ENCODE measurements at regions of chr5 and their contacts with region 1.

Region 1: GRCh38 chr5:132490486-132491367 is at the start of gene IRF1:
- DNase-seq: peak; percentile 95 to 97
- ATAC-seq: peak; percentile 86 to 94
- H3K4me3 ChIP-seq: peak within 1 kb of the TSS; percentile 83
- H3K27ac ChIP-seq: peak within 1 kb of the TSS; percentile 92 to 96
- H3K4me1 ChIP-seq: peaks cover 36% of the 10 kb centered on the region
- CTCF ChIP-seq: no peak; the same call in 2 of the 3 replicates
- EP300 ChIP-seq: no peak
- POLR2A ChIP-seq: peak; percentile 94
- RAD21 ChIP-seq: no peak
- polyA plus RNA-seq, gene IRF1: 10.9 and 11.2 TPM in 2 replicates

Region 2: DNA sequence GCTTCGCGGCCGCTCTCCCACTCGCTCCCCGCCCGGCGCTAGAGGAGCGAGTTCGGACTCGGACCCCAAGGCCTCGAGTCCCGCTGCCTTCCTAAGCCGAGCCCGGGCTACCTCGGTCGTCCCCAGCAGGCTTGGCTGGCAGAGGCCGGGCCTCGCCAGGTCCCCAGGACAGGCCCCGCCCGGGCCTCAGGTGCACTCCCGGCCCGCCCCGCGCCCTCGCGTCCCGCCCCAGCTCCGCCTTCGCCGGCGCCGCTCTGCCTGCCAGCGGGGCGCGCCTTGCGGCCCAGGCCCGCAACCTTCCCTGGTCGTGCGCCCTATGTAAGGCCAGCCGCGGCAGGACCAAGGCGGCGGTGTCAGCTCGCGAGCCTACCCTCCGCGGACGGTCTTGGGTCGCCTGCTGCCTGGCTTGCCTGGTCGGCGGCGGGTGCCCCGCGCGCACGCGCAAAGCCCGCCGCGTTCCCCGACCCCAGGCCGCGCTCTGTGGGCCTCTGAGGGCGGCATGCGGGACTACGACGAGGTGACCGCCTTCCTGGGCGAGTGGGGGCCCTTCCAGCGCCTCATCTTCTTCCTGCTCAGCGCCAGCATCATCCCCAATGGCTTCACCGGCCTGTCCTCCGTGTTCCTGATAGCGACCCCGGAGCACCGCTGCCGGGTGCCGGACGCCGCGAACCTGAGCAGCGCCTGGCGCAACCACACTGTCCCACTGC is 121.1 kb before region 1 on chr5 and contains the start of gene SLC22A5:
- CTCF ChIA-PET with region 1: interaction called, 5 read pairs
- POLR2A ChIA-PET with region 1: interaction called, 14 read pairs
- DNase-seq: peak; percentile 62 to 84
- ATAC-seq: peak; percentile 82 to 85
- H3K4me3 ChIP-seq: peak within 1 kb of the TSS; percentile 87
- H3K27ac ChIP-seq: peak within 1 kb of the TSS; percentile 92 to 93
- H3K4me1 ChIP-seq: peaks cover 68% of the 10 kb centered on the region
- CTCF ChIP-seq: no peak
- EP300 ChIP-seq: no peak
- POLR2A ChIP-seq: peak; percentile 65
- RAD21 ChIP-seq: no peak; a peak in 1 of 5 replicates
- polyA plus RNA-seq, gene SLC22A5: 35.3 and 44.8 TPM in 2 replicates

Region 3: GRCh38 chr5:132419502-132420468 is 70.9 kb before region 1 on chr5:
- CTCF ChIA-PET with region 1: interaction called, 91 read pairs
- POLR2A ChIA-PET with region 1: interaction called, 20 read pairs
- DNase-seq: peak; percentile 84 to 88
- ATAC-seq: peak; percentile 87 to 96
- H3K4me3 ChIP-seq: no peak overlapping the region
- H3K27ac ChIP-seq: peak overlapping the region; percentile 38 to 77; a peak in 5 of 6 replicates
- H3K4me1 ChIP-seq: peaks cover 33% of the 10 kb centered on the region
- CTCF ChIP-seq: peak; percentile 89
- EP300 ChIP-seq: no peak
- POLR2A ChIP-seq: no peak
- RAD21 ChIP-seq: peak; percentile 79 to 82

Region 4: DNA sequence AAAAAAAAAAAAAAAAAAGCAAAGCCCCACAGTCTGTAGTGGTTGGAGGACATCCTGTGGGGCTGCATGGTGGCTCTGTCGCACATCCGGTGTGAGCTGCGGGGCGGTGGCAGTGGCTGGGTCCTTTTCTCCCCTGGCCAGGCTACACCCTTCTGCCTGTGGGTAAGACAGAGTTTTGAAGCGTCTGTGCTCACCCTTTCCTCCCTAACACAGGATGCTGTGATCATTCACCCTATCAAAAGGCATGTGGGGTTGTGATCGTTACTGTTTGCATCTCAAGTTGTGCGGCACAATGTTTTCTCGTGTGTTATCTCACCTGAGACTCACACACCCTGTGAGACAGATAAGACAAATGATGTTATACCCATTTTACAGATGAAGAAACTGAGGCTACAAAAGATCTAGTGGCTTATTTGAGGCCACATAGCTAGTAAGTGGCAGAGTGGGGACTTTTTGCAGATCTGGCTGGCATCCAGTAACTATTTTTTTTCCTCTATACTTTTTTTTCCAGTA is 17.7 kb before region 1 on chr5:
- CTCF ChIA-PET with region 1: interaction called, 6 read pairs
- POLR2A ChIA-PET with region 1: interaction called, 32 read pairs
- DNase-seq: no peak
- ATAC-seq: no peak
- H3K4me3 ChIP-seq: no peak overlapping the region
- H3K27ac ChIP-seq: no peak overlapping the region
- H3K4me1 ChIP-seq: peaks cover 10% of the 10 kb centered on the region
- CTCF ChIP-seq: no peak
- EP300 ChIP-seq: no peak
- POLR2A ChIP-seq: no peak
- RAD21 ChIP-seq: no peak

Region 5: DNA sequence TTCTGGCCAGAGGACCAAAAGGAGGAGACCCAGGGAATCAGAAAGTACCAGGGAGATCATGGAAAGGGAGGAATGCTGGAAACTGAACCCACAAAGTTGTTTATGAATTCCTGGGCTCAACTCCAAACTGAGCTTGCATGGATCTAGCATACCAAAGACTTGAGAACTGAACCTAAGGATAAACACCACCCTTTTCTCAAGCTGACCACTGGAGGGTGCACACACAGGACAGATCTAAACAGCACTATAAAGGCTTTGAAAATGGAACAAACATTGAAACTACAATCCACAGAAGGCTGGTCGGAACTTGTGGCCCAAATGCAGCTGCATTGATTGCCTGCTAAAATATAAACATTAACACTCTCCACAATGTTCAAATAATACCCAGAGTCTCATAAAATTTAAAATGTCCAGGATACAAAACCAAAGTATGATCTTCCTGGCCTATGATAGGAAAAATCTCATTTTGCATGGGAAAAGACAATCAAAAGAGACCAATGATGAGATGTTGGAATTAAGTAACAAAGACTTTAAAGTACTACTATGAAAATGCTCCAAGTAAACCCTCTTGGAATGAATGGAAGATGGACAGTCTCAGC is 15.5 kb after region 1 on chr5:
- CTCF ChIA-PET with region 1: interaction called, 30 read pairs
- POLR2A ChIA-PET with region 1: interaction called, 3 read pairs
- DNase-seq: peak; percentile 63 to 64
- ATAC-seq: peak; percentile 87 to 91
- H3K4me3 ChIP-seq: no peak overlapping the region
- H3K27ac ChIP-seq: 0 out of 6 replicates have a peak overlapping the region, but pooled peaks of 1 of the 2 experiments have one; percentile 15
- H3K4me1 ChIP-seq: peaks cover 9% of the 10 kb centered on the region
- CTCF ChIP-seq: peak; percentile 48
- EP300 ChIP-seq: no peak
- POLR2A ChIP-seq: no peak
- RAD21 ChIP-seq: peak in 1 of 2 experiments; percentile 51; a peak in 2 of 5 replicates